CD4-positive, alpha-beta memory T cell (primary cell): ENCODE measurements at regions of chr19 and their contacts with region 1.

Region 1: GRCh38 chr19:38869856-38870607 is 8.0 kb downstream of the RINL start:
- DNase-seq: peak; percentile 92 to 96 (median 93)
- H3K4me3 ChIP-seq: peak overlapping the region; percentile 29 to 60
- H3K4me3 Mint-ChIP-seq: peak overlapping the region; percentile 88 to 94 (median 91)
- H3K27ac ChIP-seq: peak overlapping the region; percentile 66
- H3K27ac Mint-ChIP-seq: peak overlapping the region; percentile 83 to 97 (median 94)
- H3K4me1 ChIP-seq: peaks cover 40% of the 10 kb centered on the region
- H3K4me1 Mint-ChIP-seq: peaks cover 23 to 53% (median 38%) of the 10 kb centered on the region in 4 donors
- H3K27me3 ChIP-seq: no peaks in the 10 kb centered on the region
- H3K27me3 Mint-ChIP-seq: no peaks in the 10 kb centered on the region

Region 2: DNA sequence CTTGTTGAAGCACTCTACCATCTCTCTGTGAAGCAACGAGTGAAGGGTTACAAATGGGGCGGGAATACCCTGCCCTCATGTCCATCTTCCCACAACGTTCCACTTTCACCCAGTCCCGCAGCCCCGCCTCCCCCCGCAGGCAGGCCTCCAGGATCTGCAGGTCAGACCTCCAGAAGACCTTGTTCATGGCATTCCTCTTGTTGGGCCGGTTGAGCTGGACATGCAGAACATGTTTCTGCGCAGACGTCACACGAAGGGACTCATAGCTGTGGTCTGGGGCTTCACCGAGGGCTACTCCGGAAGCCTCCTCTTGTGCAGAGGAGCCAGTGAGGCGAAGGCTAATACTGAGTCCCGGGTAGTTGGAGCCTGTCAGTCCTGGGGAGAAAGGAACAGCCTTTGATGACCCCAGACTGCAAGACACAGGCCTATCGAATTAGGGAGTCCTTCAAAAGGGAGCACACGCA is 38.9 kb before region 1 on chr19:
- CTCF ChIA-PET with region 1: interaction called, 8 read pairs
- POLR2A ChIA-PET with region 1: interaction called, 17 read pairs
- intact Hi-C with region 1: loop called (anchors 1 kb)
- DNase-seq: peak in 1 of 5 donors; percentile 57
- H3K4me3 ChIP-seq: peak overlapping the region; percentile 82 to 87
- H3K4me3 Mint-ChIP-seq: peak overlapping the region; percentile 88 to 95 (median 94)
- H3K27ac ChIP-seq: peak overlapping the region; percentile 79
- H3K27ac Mint-ChIP-seq: peak overlapping the region; percentile 92 to 98 (median 95)
- H3K4me1 ChIP-seq: peaks cover 22% of the 10 kb centered on the region
- H3K4me1 Mint-ChIP-seq: peaks cover 17 to 50% (median 32%) of the 10 kb centered on the region in 4 donors
- H3K27me3 ChIP-seq: no peaks in the 10 kb centered on the region
- H3K27me3 Mint-ChIP-seq: no peaks in the 10 kb centered on the region

Region 3: DNA sequence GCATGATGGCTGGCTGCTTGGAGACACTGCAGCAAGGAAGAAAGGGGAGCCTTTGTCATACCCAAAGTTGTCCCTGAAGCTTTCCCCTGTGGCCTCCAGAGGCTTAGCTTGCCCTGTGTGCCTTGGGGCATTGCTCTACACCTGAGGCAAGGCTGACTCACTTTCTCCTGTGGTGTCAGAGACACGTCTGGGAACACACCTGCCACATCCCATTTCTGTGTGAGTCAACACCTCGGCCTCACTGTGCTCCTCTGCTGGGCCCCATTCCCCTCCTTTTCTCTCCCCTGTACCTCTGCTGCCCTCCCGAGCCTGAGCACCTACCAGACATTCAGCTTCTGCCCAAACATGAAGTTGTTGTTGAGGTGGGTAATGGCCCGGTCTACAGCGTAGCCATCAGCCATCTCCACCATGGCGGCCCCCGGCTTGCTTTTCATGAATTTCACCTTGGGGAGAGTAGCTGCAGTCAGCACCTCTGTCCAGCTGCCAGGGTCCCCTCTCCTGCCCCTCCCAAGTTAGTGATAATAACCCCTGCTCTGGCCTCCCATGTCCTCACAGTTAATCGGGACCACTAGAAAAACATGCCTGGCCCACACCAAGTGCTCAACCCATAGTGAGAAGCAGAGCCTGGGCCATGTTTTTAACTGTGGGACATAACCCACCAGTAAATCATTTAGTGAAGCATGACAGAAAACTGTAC is 31.3 kb before region 1 on chr19:
- CTCF ChIA-PET with region 1: interaction called, 16 read pairs
- POLR2A ChIA-PET with region 1: interaction called, 40 read pairs
- intact Hi-C with region 1: loop called (anchors 1 kb)
- DNase-seq: peak in 1 of 5 donors; percentile 56
- H3K4me3 ChIP-seq: no peak overlapping the region
- H3K4me3 Mint-ChIP-seq: peak overlapping the region in 1 of 8 donors; percentile 49
- H3K27ac ChIP-seq: no peak overlapping the region
- H3K27ac Mint-ChIP-seq: peak overlapping the region in 6 of 7 donors; percentile 64 to 86 (median 78)
- H3K4me1 ChIP-seq: peaks cover 46% of the 10 kb centered on the region
- H3K4me1 Mint-ChIP-seq: peaks cover 23 to 48% (median 39%) of the 10 kb centered on the region in 4 donors
- H3K27me3 ChIP-seq: no peaks in the 10 kb centered on the region
- H3K27me3 Mint-ChIP-seq: peaks cover 0 to 1% of the 10 kb centered on the region in 2 donors

Region 4: DNA sequence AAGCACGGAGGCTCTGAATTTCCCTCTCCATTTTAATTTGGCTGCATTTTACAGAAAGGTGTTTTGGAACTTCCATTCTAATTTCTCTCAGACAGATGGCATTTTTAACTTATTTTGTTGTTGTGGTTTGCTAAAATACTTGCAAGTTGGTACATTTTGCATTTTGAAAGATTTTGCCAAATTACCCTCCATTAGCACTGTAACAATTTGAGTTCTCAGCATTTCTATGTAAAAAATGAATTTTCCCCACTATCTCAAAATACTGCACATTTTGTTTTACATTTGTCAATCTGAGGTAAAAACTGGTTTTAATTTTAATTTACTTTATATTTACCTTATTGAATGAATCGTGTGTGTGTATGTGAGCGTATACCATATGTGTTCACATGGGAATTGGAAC is 13.2 kb before region 1 on chr19:
- CTCF ChIA-PET with region 1: interaction called, 45 read pairs
- POLR2A ChIA-PET with region 1: interaction called, 297 read pairs
- intact Hi-C with region 1: no loop called
- DNase-seq: no peak
- H3K4me3 ChIP-seq: no peak overlapping the region
- H3K4me3 Mint-ChIP-seq: peak overlapping the region in 7 of 8 donors; percentile 54 to 92 (median 67)
- H3K27ac ChIP-seq: peak overlapping the region; percentile 35
- H3K27ac Mint-ChIP-seq: peak overlapping the region in 5 of 7 donors; percentile 78 to 99 (median 92)
- H3K4me1 ChIP-seq: peaks cover 30% of the 10 kb centered on the region
- H3K4me1 Mint-ChIP-seq: peaks cover 20 to 38% (median 30%) of the 10 kb centered on the region in 4 donors
- H3K27me3 ChIP-seq: no peaks in the 10 kb centered on the region
- H3K27me3 Mint-ChIP-seq: peaks cover 0 to 1% of the 10 kb centered on the region in 2 donors

Region 5: GRCh38 chr19:38899447-38900219 is 29.6 kb after region 1 on chr19 and contains the starts of genes NFKBIB and SIRT2:
- CTCF ChIA-PET with region 1: interaction called, 5 read pairs
- POLR2A ChIA-PET with region 1: interaction called, 4 read pairs
- intact Hi-C with region 1: loop called (anchors 1 kb)
- DNase-seq: peak; percentile 98 to 100 (median 100)
- H3K4me3 ChIP-seq: peak within 1 kb of the TSS; percentile 71 to 87
- H3K4me3 Mint-ChIP-seq: peak within 1 kb of the TSS; percentile 92 to 98 (median 96)
- H3K27ac ChIP-seq: peak within 1 kb of the TSS; percentile 99
- H3K27ac Mint-ChIP-seq: peak within 1 kb of the TSS; percentile 90 to 100 (median 99)
- H3K4me1 ChIP-seq: peaks cover 34% of the 10 kb centered on the region
- H3K4me1 Mint-ChIP-seq: peaks cover 17 to 59% (median 39%) of the 10 kb centered on the region in 4 donors
- H3K27me3 ChIP-seq: no peaks in the 10 kb centered on the region
- H3K27me3 Mint-ChIP-seq: no peaks in the 10 kb centered on the region
- total RNA-seq, gene NFKBIB: 23.9 to 26.0 TPM
- total RNA-seq, gene SIRT2: 47.0 to 50.0 TPM